ENCODE measurements at regions of chr12 and their contacts with region 1.

Region 1: GRCh38 chr12:31702047-31702446 is 26.8 kb downstream of the AMN1 start:
- DNase-seq: no peak
- ATAC-seq: no peak
- H3K4me3 ChIP-seq: no peak overlapping the region
- H3K27ac ChIP-seq: no peak overlapping the region
- H3K4me1 ChIP-seq: no peaks in the 10 kb centered on the region
- H3K27me3 ChIP-seq: no peaks in the 10 kb centered on the region
- CTCF ChIP-seq: no peak
- EP300 ChIP-seq: no peak
- POLR2A ChIP-seq: no peak
- RAD21 ChIP-seq: 0 out of 2 replicates have a peak, but pooled peaks have one; percentile 7

Region 2: DNA sequence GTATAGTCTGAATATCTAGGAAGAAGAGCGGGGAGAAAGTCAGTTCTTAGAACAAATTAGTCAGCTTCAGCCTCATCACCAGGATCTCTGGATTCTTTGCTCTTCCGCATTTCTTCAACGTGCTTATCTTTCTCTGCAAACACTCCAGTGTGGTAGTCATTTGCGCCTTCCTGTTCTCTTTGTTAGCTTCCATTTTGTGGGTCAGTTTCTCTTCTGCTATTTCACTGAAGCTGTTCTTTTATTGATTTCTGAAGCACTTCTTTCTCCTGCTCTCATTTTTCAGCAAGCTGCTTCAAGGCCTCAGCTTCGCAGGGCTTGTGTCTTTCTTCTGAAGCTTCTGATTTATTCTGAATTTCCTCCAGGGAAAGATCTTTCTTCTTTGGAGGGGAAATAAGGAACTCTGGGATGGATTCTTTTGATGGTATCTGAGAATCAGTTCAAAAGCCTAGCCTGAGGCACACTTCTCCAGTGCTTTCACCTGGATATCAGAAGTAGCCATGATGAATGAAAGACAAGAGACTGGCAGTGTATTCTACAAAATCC is 13.3 kb after region 1 on chr12:
- CTCF ChIA-PET with region 1: interaction called, 4 read pairs
- POLR2A ChIA-PET with region 1: no interaction called
- RAD21 ChIA-PET with region 1: interaction called, 5 read pairs
- SMC1A ChIA-PET with region 1: interaction called, 14 read pairs
- in situ Hi-C with region 1: no loop called
- intact Hi-C with region 1: no loop called
- DNase-seq: peak; percentile 77
- ATAC-seq: peak; percentile 95
- H3K4me3 ChIP-seq: peak overlapping the region; percentile 54; the same call in 1 of the 2 replicates
- H3K27ac ChIP-seq: peak overlapping the region; percentile 90
- H3K4me1 ChIP-seq: peaks cover 10% of the 10 kb centered on the region
- H3K27me3 ChIP-seq: no peaks in the 10 kb centered on the region
- CTCF ChIP-seq: no peak
- EP300 ChIP-seq: peak in 1 of 2 experiments; percentile 35; a peak in 1 of 4 replicates
- POLR2A ChIP-seq: no peak
- RAD21 ChIP-seq: peak; percentile 13

Region 3: DNA sequence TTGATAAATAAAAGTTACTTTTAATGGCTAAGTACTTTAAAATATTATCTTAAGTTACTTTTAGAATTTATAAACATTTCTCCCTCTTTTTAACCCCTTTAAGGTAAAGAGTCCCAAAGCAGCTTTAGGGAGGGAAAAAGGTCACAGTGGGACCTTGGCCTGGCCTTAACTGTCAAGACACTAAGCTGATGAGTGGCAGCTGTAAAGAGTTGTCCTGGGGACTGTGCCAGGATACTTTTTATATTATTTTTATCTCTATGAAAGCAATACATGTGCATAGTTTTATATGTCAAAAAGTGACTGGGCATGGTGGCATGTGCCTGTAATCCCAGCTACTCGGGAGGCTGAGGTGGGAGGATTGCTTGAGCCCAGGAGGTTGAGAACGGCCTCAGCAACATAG is 163.0 kb after region 1 on chr12:
- CTCF ChIA-PET with region 1: no interaction called
- POLR2A ChIA-PET with region 1: interaction called, 10 read pairs
- RAD21 ChIA-PET with region 1: no interaction called
- SMC1A ChIA-PET with region 1: no interaction called
- in situ Hi-C with region 1: no loop called
- intact Hi-C with region 1: no loop called
- DNase-seq: no peak
- ATAC-seq: no peak
- H3K4me3 ChIP-seq: no peak overlapping the region
- H3K27ac ChIP-seq: no peak overlapping the region
- H3K4me1 ChIP-seq: no peaks in the 10 kb centered on the region
- H3K27me3 ChIP-seq: no peaks in the 10 kb centered on the region
- CTCF ChIP-seq: no peak
- EP300 ChIP-seq: no peak
- POLR2A ChIP-seq: no peak
- RAD21 ChIP-seq: no peak

Measured in GM12878 (cell line).